ENCODE measurements at regions of chr1 and their contacts with region 1.

Region 1: GRCh38 chr1:63428815-63429214 is 61.4 kb downstream of the ALG6 start:
- DNase-seq: no peak
- ATAC-seq: no peak
- H3K4me3 ChIP-seq: no peak overlapping the region
- H3K27ac ChIP-seq: no peak overlapping the region
- H3K4me1 ChIP-seq: no peaks in the 10 kb centered on the region
- H3K27me3 ChIP-seq: no peaks in the 10 kb centered on the region
- CTCF ChIP-seq: no peak

Region 2: DNA sequence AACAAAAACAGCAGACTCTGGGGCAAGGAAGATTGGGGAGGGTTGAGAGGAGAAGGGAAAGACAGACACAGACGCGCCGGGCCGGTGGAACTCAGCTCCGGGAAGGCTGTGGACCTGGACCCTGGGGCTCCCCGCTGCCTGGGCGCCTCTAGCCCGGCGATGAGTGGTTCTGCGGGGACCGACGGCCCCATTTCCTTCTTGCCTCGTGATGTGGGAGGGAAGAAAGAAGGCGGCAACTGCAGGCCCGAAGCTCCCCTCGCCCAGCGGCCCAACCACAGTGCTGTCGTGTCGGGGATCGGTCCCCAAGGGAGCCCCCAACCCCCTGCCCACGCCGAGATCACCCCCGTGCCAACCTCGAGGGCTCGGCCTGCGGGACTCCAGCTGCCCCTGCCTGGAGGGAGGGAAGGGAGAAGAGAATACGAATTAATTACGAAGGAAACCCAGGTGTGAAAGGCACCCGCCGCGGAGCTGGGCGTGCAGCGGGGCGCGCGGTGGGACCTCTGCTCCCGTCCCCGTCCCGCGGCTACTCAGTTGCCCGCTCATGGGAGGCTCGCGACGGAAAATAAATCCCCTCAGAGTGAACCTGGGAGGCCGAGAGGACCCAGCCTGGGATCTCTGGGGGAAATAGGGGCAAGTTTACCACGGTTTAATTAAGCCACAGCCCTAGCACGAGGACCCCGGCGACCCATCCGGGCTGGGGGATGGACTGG is 99.0 kb before region 1 on chr1:
- intact Hi-C with region 1: loop called in 1 of 10 experiments (anchors 10 kb)
- DNase-seq: no peak
- ATAC-seq: peak in 2 of 8 donors; percentile 18 to 19
- H3K4me3 ChIP-seq: peak overlapping the region in 1 of 10 donors; percentile 19
- H3K27ac ChIP-seq: no peak overlapping the region
- H3K4me1 ChIP-seq: peaks cover 0 to 35% (median 3%) of the 10 kb centered on the region in 9 donors
- H3K27me3 ChIP-seq: peaks cover 55 to 100% (median 99%) of the 10 kb centered on the region in 7 donors
- CTCF ChIP-seq: no peak